K562 (cell line): ENCODE measurements at regions of chr17 and their contacts with region 1.

Region 1: DNA sequence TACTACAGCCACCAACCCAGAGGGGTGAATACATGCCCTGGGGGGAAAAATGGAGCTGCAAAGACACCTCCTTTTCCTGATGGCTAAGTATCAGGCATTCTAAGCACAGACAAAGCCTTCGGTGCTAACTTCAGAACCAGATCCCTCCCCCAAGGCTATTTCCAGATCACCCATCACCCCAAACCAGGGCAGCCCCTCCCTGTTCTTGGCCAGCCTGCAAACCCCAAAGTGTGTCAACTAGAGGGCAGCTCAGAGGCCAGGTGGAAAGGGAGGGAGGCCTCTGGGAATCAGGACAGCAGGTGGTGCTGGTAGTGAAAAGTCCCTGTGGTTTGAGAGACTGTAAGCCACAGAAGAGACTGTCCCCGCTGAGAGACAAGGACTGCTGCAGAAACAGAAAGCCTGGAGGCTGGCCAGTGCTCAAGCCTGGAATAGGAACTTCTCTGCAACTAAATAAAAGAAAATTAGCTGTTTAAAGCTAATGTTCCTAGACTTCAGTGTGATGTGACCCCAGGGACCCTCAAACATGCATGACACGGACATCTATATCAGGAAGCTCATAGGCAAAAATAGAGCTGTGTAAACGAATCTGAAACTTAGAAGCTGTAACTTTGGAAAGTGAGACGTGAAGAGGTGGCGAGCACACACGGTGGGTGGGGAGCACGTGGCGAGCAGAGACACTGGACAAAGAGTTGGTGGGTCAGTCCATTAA is 9.1 kb downstream of the TUBG1 start:
- DNase-seq: peak; percentile 65 to 82 (median 70)
- ATAC-seq: peak; percentile 92
- H3K4me3 ChIP-seq: no peak overlapping the region
- H3K27ac ChIP-seq: no peak overlapping the region; the same call in 2 of the 3 replicates
- H3K4me1 ChIP-seq: peaks cover 21 to 31% of the 10 kb centered on the region in 2 experiments; a peak in 4 of 5 replicates
- H3K27me3 ChIP-seq: no peaks in the 10 kb centered on the region
- CTCF ChIP-seq: peak; percentile 65 to 93 (median 87)
- EP300 ChIP-seq: no peak
- POLR2A ChIP-seq: no peak
- RAD21 ChIP-seq: peak; percentile 56 to 76

Region 2: DNA sequence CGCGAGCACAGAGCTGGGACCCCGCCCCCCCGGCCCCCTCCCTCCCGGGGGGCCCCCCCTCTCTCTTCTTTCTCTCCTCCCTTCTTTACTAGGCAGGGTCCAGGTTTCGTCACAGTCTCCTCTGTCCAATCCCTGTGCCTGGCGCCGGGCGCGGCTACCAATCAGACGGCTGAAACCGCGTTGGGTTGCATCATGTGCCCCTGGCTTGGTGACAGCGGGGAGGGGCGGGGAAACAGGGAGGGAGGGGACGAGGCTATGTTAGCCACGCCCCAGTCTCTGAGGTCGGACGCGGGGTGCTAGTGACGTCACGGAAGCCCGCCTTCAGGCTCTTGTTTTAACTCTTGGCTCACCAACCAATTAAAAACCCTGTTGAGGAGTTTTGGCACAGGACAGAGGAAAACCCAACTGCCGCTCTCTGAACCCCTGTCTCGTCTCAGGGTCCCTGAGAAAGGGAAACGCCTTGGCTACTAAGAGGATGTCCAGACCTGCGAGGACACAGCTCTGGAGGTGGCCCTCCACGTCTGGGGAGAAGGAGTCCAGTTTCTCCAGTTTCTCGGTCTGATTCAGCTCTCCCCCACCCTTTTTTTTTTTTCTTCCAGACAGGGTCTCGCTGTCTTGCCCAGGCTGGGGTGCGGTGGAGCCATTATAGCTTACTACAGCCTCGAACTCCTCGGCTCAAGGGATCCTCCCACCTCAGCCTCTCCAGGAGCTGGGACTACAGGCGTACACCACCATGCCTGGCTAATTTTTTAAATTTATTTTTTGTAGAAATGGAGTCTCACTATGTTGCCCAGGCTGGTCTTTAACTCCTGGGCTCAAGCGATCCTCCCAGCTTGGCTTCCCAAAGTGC is 58.6 kb after region 1 on chr17:
- CTCF ChIA-PET with region 1: no interaction called
- POLR2A ChIA-PET with region 1: interaction called, 3 read pairs
- in situ Hi-C with region 1: no loop called
- intact Hi-C with region 1: loop called (anchors 2 kb)
- DNase-seq: peak; percentile 95 to 100 (median 98)
- ATAC-seq: peak; percentile 79
- H3K4me3 ChIP-seq: peak overlapping the region; percentile 61
- H3K27ac ChIP-seq: peak overlapping the region; percentile 95
- H3K4me1 ChIP-seq: peaks cover 42 to 75% of the 10 kb centered on the region in 2 experiments
- H3K27me3 ChIP-seq: no peaks in the 10 kb centered on the region
- CTCF ChIP-seq: no peak
- EP300 ChIP-seq: no peak
- POLR2A ChIP-seq: no peak
- RAD21 ChIP-seq: no peak